Activated naive CD4-positive, alpha-beta T cell treated with anti-CD3 and anti-CD28 coated beads for 36 hours (primary cell): ENCODE measurements at regions of chr18 and their contacts with region 1.

Region 1: GRCh38 chr18:32018331-32019250 is at the start of gene RNF125:
- DNase-seq: peak; percentile 81
- H3K4me3 Mint-ChIP-seq: peak within 1 kb of the TSS; percentile 99
- H3K27ac Mint-ChIP-seq: peak within 1 kb of the TSS; percentile 93
- H3K4me1 Mint-ChIP-seq: peaks cover 38% of the 10 kb centered on the region
- H3K27me3 Mint-ChIP-seq: no peaks in the 10 kb centered on the region
- total RNA-seq, gene RNF125: 11.4 to 12.0 TPM

Region 2: GRCh38 chr18:31658670-31659575 is 359.7 kb before region 1 on chr18:
- CTCF ChIA-PET with region 1: no interaction called
- intact Hi-C with region 1: loop called (anchors 1 kb)
- DNase-seq: peak; percentile 38
- H3K4me3 Mint-ChIP-seq: no peak overlapping the region
- H3K27ac Mint-ChIP-seq: peak overlapping the region; percentile 34
- H3K4me1 Mint-ChIP-seq: peaks cover 22% of the 10 kb centered on the region
- H3K27me3 Mint-ChIP-seq: peaks cover under 1% of the 10 kb centered on the region

Region 3: DNA sequence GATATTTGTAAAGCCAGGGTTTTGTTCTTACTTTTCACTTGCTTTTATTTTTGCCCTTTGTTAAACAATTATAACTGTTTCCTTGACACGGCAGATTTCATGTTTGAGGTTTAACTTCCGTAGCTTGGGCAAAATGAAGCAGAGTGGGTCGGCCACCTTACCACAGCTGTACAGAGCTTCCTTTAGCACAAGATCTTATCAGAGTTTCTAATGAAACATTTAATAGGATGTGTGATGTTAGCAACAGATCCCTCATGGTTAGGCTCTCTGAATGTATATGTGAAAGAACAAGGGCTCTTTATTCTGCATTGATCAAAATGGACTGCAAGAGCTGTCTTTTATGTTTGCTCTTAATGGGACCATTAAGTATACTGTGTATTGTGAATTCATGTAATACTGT is 22.3 kb after region 1 on chr18:
- CTCF ChIA-PET with region 1: interaction called, 7 read pairs
- intact Hi-C with region 1: loop called (anchors 1 kb)
- DNase-seq: peak; percentile 49
- H3K4me3 Mint-ChIP-seq: peak overlapping the region; percentile 54
- H3K27ac Mint-ChIP-seq: peak overlapping the region; percentile 82
- H3K4me1 Mint-ChIP-seq: peaks cover 36% of the 10 kb centered on the region
- H3K27me3 Mint-ChIP-seq: no peaks in the 10 kb centered on the region

Region 4: DNA sequence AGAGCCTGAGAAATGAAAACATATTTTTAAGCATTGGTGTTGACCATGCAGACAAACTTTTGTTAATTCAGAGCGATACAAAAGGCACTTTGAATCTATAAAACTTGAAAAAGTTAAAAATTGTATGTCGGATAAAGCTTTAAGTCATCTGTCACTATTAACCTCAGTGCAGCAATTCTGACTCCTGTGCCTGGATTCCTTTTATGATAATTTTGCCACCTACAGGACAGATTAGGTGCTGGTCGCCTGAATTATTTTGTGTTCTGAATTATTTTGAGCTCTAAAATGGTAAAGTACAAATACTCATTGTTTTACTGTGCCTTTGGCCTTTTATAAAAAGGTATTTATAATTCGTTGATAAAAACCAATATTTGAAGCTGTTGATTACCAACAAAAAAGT is 53.7 kb after region 1 on chr18:
- CTCF ChIA-PET with region 1: interaction called, 16 read pairs
- intact Hi-C with region 1: loop called (anchors 1 kb)
- DNase-seq: no peak
- H3K4me3 Mint-ChIP-seq: no peak overlapping the region
- H3K27ac Mint-ChIP-seq: no peak overlapping the region
- H3K4me1 Mint-ChIP-seq: peaks cover 8% of the 10 kb centered on the region
- H3K27me3 Mint-ChIP-seq: no peaks in the 10 kb centered on the region

Region 5: GRCh38 chr18:32158108-32158624 is 139.6 kb after region 1 on chr18:
- CTCF ChIA-PET with region 1: interaction called, 4 read pairs
- intact Hi-C with region 1: loop called (anchors 1 kb)
- DNase-seq: peak; percentile 80
- H3K4me3 Mint-ChIP-seq: peak overlapping the region; percentile 49
- H3K27ac Mint-ChIP-seq: no peak overlapping the region
- H3K4me1 Mint-ChIP-seq: peaks cover 5% of the 10 kb centered on the region
- H3K27me3 Mint-ChIP-seq: no peaks in the 10 kb centered on the region

Region 6: DNA sequence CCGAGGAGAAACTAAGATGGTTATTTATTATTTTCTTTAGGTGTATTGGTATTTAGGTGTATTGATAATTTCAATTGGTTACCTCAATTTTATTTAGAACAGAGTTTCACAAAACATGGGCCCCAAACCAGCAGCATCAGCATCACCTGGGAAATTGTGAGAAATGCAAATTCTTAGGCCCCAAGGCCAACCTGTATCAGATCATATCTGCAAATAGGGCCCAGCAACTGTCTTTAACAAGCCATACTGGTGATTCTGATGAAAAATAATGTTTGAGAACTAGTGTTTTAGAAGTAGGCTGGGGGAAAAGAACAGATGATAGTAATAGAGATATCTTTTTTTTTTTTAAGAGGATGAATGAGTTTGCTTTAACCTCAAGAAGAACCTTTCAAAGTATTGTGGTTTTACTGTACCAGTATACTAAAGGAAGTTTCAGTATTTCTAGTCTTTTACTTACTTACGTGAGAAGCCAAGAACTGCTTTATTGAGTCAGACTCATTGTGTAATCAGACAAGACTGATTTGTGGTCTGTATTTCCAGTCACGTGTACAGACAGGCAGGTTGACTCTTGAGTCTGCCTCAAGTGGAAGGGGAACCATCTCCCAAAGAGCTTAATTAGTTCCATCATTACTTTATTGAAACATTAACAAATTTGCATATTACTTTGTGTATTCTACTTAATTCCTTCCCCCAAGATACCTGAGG is 512.5 kb after region 1 on chr18:
- CTCF ChIA-PET with region 1: no interaction called
- intact Hi-C with region 1: loop called (anchors 5 kb)
- DNase-seq: peak; percentile 40
- H3K4me3 Mint-ChIP-seq: no peak overlapping the region
- H3K27ac Mint-ChIP-seq: peak overlapping the region; percentile 9
- H3K4me1 Mint-ChIP-seq: peaks cover 17% of the 10 kb centered on the region
- H3K27me3 Mint-ChIP-seq: peaks cover 13% of the 10 kb centered on the region